CD4-positive, alpha-beta memory T cell (primary cell): ENCODE measurements at regions of chr6 and their contacts with region 1.

Region 1: DNA sequence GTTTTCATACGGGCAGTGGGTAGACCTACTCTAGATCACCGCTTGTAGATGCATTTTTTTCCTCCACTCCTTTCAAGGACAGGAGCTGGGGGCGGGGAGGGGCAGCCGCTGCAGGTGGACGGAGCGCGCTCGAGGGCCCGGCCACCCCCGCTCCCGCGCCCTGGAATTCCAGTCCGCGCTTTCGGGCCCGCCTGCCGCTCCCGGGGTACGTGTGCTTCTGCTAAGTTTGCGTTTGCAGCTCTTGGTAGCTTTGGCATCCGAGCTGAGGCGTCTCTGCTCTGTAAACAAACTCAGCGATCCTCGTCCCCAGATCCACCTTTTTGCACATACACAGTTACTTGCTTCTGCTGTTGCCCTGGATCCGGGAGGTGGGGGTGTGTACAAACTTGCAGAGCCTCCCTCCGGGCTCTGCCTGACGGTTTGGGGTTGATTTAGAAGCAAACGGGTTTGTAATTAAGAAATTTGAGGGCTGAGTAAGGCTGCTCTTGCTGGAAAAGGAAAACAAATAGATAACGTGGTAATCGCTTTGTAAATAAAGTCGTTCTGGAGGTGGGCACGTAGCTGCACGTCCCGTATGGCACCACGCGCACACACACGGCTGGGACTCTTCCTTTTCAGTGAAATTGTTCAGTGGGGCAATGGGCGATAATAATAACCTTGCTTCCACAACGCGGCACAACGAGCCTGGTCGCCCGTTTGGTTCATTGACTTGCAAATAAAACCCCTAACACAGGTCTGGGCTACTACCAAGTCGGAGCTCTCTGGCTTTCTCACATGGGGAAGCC is 976 bp upstream of the CITED2 start:
- DNase-seq: peak; percentile 87 to 95 (median 91)
- H3K4me3 ChIP-seq: peak overlapping the region; percentile 52 to 98
- H3K4me3 Mint-ChIP-seq: peak overlapping the region; percentile 93 to 100 (median 98)
- H3K27ac ChIP-seq: peak overlapping the region; percentile 82
- H3K27ac Mint-ChIP-seq: peak overlapping the region; percentile 96 to 99 (median 96)
- H3K4me1 ChIP-seq: peaks cover 26% of the 10 kb centered on the region
- H3K4me1 Mint-ChIP-seq: peaks cover 18 to 44% (median 26%) of the 10 kb centered on the region in 4 donors
- H3K27me3 ChIP-seq: no peaks in the 10 kb centered on the region
- H3K27me3 Mint-ChIP-seq: no peaks in the 10 kb centered on the region

Region 2: DNA sequence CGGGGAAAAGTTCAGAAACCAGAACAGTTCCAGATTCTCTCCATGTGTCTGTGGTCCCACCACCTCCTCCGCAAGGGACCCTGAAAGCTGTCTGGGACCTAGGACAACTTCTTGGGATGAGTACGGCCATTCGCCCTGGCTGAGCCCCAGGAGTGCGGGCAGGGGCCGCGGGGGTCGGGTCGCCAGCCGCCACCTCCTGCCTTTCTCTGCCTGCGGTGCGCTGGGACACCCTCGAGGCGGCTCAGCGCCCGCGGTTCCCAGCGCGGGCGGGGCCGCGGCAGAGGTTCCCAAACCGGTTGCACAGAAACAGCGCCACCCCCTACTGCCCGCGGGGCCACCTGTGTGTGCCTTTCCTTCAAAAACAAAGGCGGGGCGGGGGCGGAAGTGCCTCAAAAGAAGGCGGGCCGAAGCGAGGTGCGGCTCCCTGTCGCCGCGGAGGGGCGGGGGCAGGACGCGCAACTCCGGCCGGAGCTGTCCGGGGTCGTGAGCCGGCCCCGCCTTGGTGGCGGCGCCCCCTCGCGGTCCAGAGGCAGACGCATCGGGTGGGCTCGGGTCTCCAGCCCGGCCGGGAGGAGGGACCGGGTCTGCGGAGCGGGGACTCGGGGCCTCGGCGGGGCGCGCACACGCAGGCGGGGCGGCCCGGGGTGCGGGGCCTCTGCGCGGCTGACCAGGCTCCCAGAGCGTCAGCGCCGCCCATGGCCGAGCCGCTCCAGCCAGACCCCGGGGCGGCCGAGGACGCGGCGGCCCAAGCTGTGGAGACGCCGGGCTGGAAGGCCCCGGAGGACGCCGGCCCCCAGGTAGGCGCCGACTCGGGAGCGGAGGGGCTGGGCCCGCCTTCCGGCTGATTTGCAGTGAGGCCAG is 971.4 kb before region 1 on chr6 and contains the start of gene HEBP2:
- CTCF ChIA-PET with region 1: no interaction called
- POLR2A ChIA-PET with region 1: no interaction called
- intact Hi-C with region 1: loop called (anchors 2 kb)
- DNase-seq: peak; percentile 87 to 97 (median 90)
- H3K4me3 ChIP-seq: peak within 1 kb of the TSS; percentile 2 to 73
- H3K4me3 Mint-ChIP-seq: peak within 1 kb of the TSS; percentile 84 to 90 (median 88)
- H3K27ac ChIP-seq: peak within 1 kb of the TSS; percentile 72
- H3K27ac Mint-ChIP-seq: peak within 1 kb of the TSS; percentile 84 to 92 (median 88)
- H3K4me1 ChIP-seq: peaks cover 22% of the 10 kb centered on the region
- H3K4me1 Mint-ChIP-seq: peaks cover 13 to 30% (median 26%) of the 10 kb centered on the region in 4 donors
- H3K27me3 ChIP-seq: no peaks in the 10 kb centered on the region
- H3K27me3 Mint-ChIP-seq: no peaks in the 10 kb centered on the region
- total RNA-seq, gene HEBP2: 47.2 to 52.7 TPM

Region 3: DNA sequence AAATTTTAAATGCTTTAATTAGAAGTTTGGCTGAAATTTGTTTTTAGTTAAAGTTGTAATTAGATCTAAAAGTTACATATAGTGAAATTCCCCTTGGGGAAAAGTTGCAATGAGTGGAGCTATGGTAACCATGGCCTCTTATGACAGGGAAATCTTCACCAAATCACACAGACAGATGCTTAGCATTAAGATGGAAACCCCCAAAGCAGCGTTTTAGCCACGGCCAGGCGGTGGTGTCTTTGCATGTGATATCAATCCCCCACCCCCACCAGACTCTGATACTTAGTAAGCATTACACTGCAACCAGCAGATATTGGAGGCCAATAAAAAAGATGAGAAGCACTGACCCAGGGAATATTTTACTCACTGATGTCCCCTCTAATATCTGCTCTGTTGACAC is 463.1 kb before region 1 on chr6:
- CTCF ChIA-PET with region 1: no interaction called
- POLR2A ChIA-PET with region 1: no interaction called
- intact Hi-C with region 1: no loop called
- DNase-seq: no peak
- H3K4me3 ChIP-seq: no peak overlapping the region
- H3K4me3 Mint-ChIP-seq: no peak overlapping the region
- H3K27ac ChIP-seq: no peak overlapping the region
- H3K27ac Mint-ChIP-seq: no peak overlapping the region
- H3K4me1 ChIP-seq: no peaks in the 10 kb centered on the region
- H3K4me1 Mint-ChIP-seq: no peaks in the 10 kb centered on the region
- H3K27me3 ChIP-seq: no peaks in the 10 kb centered on the region
- H3K27me3 Mint-ChIP-seq: no peaks in the 10 kb centered on the region

Region 4: GRCh38 chr6:139028658-139029469 is 346.6 kb before region 1 on chr6 and contains the start of gene ABRACL:
- CTCF ChIA-PET with region 1: no interaction called
- POLR2A ChIA-PET with region 1: interaction called, 62 read pairs
- intact Hi-C with region 1: loop called (anchors 1 kb)
- DNase-seq: peak; percentile 74 to 88 (median 75)
- H3K4me3 ChIP-seq: peak within 1 kb of the TSS; percentile 59 to 97
- H3K4me3 Mint-ChIP-seq: peak within 1 kb of the TSS in 5 of 8 donors; percentile 93 to 98 (median 95)
- H3K27ac ChIP-seq: peak within 1 kb of the TSS; percentile 88
- H3K27ac Mint-ChIP-seq: peak within 1 kb of the TSS; percentile 88 to 98 (median 92)
- H3K4me1 ChIP-seq: peaks cover 46% of the 10 kb centered on the region
- H3K4me1 Mint-ChIP-seq: peaks cover 22 to 34% (median 28%) of the 10 kb centered on the region in 4 donors
- H3K27me3 ChIP-seq: no peaks in the 10 kb centered on the region
- H3K27me3 Mint-ChIP-seq: no peaks in the 10 kb centered on the region
- total RNA-seq, gene ABRACL: 103 to 112 TPM

Region 5: DNA sequence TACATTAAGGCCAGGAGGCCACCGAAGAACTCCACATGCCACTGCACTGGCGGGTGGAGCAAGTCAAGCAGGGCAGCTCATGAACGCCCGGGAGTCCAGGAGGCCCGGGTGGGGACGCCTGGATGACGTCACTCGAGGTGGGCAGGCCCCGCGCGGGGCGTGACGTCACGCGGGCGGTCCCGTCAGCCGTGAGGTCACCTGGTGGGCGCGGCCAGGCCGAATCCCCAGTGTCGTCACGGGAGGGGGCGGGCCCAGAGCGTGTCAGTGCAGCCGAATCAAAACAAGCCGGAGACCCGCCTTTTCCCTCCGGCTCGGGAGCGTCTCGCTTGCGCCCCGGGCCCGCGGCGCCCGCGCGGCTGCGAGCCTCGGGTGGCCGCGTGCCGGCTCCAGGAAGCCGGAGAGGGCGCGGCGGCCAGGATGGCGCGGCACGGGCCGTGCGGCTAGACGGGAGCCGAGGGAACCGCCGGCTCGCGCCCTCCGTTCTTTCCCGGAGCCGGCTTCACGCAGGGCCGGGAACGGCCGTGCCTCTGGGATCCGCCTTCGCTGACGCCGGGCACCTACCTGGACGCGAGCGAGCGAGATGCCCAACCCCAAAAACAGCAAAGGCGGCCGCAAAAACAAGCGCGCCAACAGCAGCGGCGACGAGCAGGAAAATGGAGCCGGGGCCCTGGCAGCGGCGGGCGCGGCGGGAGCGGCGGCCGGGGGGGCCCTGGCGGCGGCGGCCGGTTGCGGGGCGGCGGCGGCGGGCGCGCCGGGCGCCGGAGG is 240.4 kb before region 1 on chr6 and contains the start of gene HECA:
- CTCF ChIA-PET with region 1: interaction called, 9 read pairs
- POLR2A ChIA-PET with region 1: interaction called, 60 read pairs
- intact Hi-C with region 1: loop called (anchors 1 kb)
- DNase-seq: peak; percentile 98 to 100 (median 99)
- H3K4me3 ChIP-seq: peak within 1 kb of the TSS; percentile 75 to 95
- H3K4me3 Mint-ChIP-seq: peak within 1 kb of the TSS; percentile 90 to 98 (median 95)
- H3K27ac ChIP-seq: peak within 1 kb of the TSS; percentile 97
- H3K27ac Mint-ChIP-seq: peak within 1 kb of the TSS; percentile 98 to 100 (median 99)
- H3K4me1 ChIP-seq: peaks cover 60% of the 10 kb centered on the region
- H3K4me1 Mint-ChIP-seq: peaks cover 48 to 84% (median 57%) of the 10 kb centered on the region in 4 donors
- H3K27me3 ChIP-seq: no peaks in the 10 kb centered on the region
- H3K27me3 Mint-ChIP-seq: no peaks in the 10 kb centered on the region
- total RNA-seq, gene HECA: 154 to 161 TPM

Region 6: GRCh38 chr6:139256087-139256486 is 119.3 kb before region 1 on chr6:
- CTCF ChIA-PET with region 1: interaction called, 8 read pairs
- POLR2A ChIA-PET with region 1: interaction called, 28 read pairs
- intact Hi-C with region 1: no loop called
- DNase-seq: no peak
- H3K4me3 ChIP-seq: no peak overlapping the region
- H3K4me3 Mint-ChIP-seq: peak overlapping the region in 1 of 8 donors; percentile 17
- H3K27ac ChIP-seq: no peak overlapping the region
- H3K27ac Mint-ChIP-seq: peak overlapping the region in 6 of 7 donors; percentile 62 to 94 (median 82)
- H3K4me1 ChIP-seq: peaks cover 55% of the 10 kb centered on the region
- H3K4me1 Mint-ChIP-seq: peaks cover 46 to 61% (median 50%) of the 10 kb centered on the region in 4 donors
- H3K27me3 ChIP-seq: no peaks in the 10 kb centered on the region
- H3K27me3 Mint-ChIP-seq: no peaks in the 10 kb centered on the region

Region 7: DNA sequence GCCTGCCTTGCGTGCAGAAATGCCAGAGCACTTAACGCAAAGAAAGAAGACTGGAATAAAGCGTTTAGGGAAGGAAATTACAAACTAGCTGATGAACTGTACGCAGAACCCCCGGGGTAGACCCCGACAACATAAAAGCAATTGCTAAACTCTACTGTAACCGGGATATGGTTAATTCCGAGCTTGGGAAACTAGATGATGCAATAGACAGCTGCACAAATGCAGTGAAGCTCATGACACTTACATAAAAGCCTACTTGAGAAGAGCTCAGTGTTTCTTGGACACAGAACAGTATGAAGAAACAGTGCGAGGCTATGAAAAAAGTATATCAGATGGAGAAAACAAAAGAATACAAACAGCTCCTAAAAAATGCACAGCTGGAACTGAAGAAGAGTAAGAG is 36.6 kb before region 1 on chr6:
- CTCF ChIA-PET with region 1: no interaction called
- POLR2A ChIA-PET with region 1: no interaction called
- intact Hi-C with region 1: no loop called
- DNase-seq: no peak
- H3K4me3 ChIP-seq: no peak overlapping the region
- H3K4me3 Mint-ChIP-seq: no peak overlapping the region
- H3K27ac ChIP-seq: no peak overlapping the region
- H3K27ac Mint-ChIP-seq: peak overlapping the region in 2 of 7 donors; percentile 11 to 18
- H3K4me1 ChIP-seq: peaks cover 13% of the 10 kb centered on the region
- H3K4me1 Mint-ChIP-seq: peaks cover 8 to 14% (median 11%) of the 10 kb centered on the region in 4 donors
- H3K27me3 ChIP-seq: no peaks in the 10 kb centered on the region
- H3K27me3 Mint-ChIP-seq: no peaks in the 10 kb centered on the region

Region 8: GRCh38 chr6:139490482-139490881 is 115.1 kb after region 1 on chr6:
- CTCF ChIA-PET with region 1: interaction called, 5 read pairs
- POLR2A ChIA-PET with region 1: interaction called, 11 read pairs
- intact Hi-C with region 1: no loop called
- DNase-seq: peak; percentile 34 to 55 (median 39)
- H3K4me3 ChIP-seq: no peak overlapping the region
- H3K4me3 Mint-ChIP-seq: peak overlapping the region in 4 of 8 donors; percentile 1 to 37 (median 16)
- H3K27ac ChIP-seq: no peak overlapping the region
- H3K27ac Mint-ChIP-seq: peak overlapping the region in 5 of 7 donors; percentile 14 to 70 (median 28)
- H3K4me1 ChIP-seq: peaks cover 10% of the 10 kb centered on the region
- H3K4me1 Mint-ChIP-seq: peaks cover 6 to 14% (median 8%) of the 10 kb centered on the region in 4 donors
- H3K27me3 ChIP-seq: no peaks in the 10 kb centered on the region
- H3K27me3 Mint-ChIP-seq: no peaks in the 10 kb centered on the region

Region 9: GRCh38 chr6:139895205-139895793 is 519.9 kb after region 1 on chr6:
- CTCF ChIA-PET with region 1: interaction called, 24 read pairs
- POLR2A ChIA-PET with region 1: interaction called, 5 read pairs
- intact Hi-C with region 1: loop called (anchors 1 kb)
- DNase-seq: no peak
- H3K4me3 ChIP-seq: no peak overlapping the region
- H3K4me3 Mint-ChIP-seq: no peak overlapping the region
- H3K27ac ChIP-seq: no peak overlapping the region
- H3K27ac Mint-ChIP-seq: no peak overlapping the region
- H3K4me1 ChIP-seq: no peaks in the 10 kb centered on the region
- H3K4me1 Mint-ChIP-seq: no peaks in the 10 kb centered on the region
- H3K27me3 ChIP-seq: no peaks in the 10 kb centered on the region
- H3K27me3 Mint-ChIP-seq: peaks cover 2 to 3% of the 10 kb centered on the region in 2 donors